ENCODE measurements at regions of chr17 and their contacts with region 1.

Region 1: GRCh38 chr17:81959362-81960129 is 1.4 kb downstream of the NOTUM start:
- DNase-seq: peak; percentile 80 to 86 (median 82)
- H3K4me3 ChIP-seq: no peak overlapping the region
- H3K4me3 Mint-ChIP-seq: peak overlapping the region in 1 of 7 donors; percentile 43
- H3K27ac ChIP-seq: peak overlapping the region; percentile 16
- H3K27ac Mint-ChIP-seq: no peak overlapping the region
- H3K4me1 ChIP-seq: no peaks in the 10 kb centered on the region
- H3K4me1 Mint-ChIP-seq: peaks cover 6 to 18% (median 7%) of the 10 kb centered on the region in 3 donors
- H3K27me3 ChIP-seq: peaks cover 13% of the 10 kb centered on the region
- H3K27me3 Mint-ChIP-seq: peaks cover 23 to 29% of the 10 kb centered on the region in 2 donors

Region 2: DNA sequence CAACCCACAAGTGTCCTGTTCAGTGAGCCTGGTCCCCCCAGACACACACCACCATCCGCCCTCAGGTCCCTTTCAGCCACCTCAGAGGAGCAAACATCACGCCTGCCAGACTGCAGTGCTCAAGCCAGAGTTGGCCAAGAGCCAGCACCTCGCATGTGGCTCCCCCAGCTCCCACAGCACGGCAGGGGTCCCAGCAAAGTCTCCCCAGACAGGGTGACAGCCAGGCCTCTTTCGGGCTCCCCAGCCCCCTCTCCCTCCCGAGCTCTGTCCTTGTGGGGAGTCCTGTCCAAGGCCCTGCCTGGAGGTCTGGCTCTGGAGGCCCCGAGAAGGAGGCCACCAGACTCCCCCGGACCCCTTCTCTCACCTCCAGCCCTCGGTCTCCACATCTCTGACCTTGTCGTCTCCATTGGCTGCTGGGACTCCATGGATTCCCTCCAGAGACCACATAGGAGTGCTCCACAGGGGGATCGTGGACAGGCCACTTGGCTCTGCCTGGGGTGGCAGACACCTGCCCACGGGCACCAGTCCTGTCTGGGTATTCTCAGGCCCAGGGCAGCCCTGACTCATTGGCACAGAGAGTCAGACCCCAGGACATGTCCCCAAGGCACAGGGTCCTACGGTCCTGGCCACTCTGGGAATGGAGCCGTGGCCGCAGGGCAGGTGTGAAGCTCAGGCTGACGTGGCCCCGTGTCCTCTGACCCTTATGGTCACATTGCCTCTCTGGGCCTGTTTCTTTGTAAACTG is 10.7 kb before region 1 on chr17:
- CTCF ChIA-PET with region 1: interaction called, 10 read pairs
- POLR2A ChIA-PET with region 1: no interaction called
- DNase-seq: no peak
- H3K4me3 ChIP-seq: no peak overlapping the region
- H3K4me3 Mint-ChIP-seq: no peak overlapping the region
- H3K27ac ChIP-seq: no peak overlapping the region
- H3K27ac Mint-ChIP-seq: peak overlapping the region in 1 of 8 donors; percentile 87
- H3K4me1 ChIP-seq: no peaks in the 10 kb centered on the region
- H3K4me1 Mint-ChIP-seq: peaks cover 0 to 3% (median 0%) of the 10 kb centered on the region in 3 donors
- H3K27me3 ChIP-seq: no peaks in the 10 kb centered on the region
- H3K27me3 Mint-ChIP-seq: no peaks in the 10 kb centered on the region

Region 3: GRCh38 chr17:81976332-81977210 is 17.0 kb after region 1 on chr17:
- CTCF ChIA-PET with region 1: interaction called, 15 read pairs
- POLR2A ChIA-PET with region 1: no interaction called
- DNase-seq: peak in 1 of 5 donors; percentile 27
- H3K4me3 ChIP-seq: peak overlapping the region; percentile 72
- H3K4me3 Mint-ChIP-seq: peak overlapping the region; percentile 80 to 96 (median 94)
- H3K27ac ChIP-seq: peak overlapping the region; percentile 72
- H3K27ac Mint-ChIP-seq: peak overlapping the region; percentile 82 to 99 (median 96)
- H3K4me1 ChIP-seq: peaks cover 28% of the 10 kb centered on the region
- H3K4me1 Mint-ChIP-seq: peaks cover 18 to 36% (median 29%) of the 10 kb centered on the region in 3 donors
- H3K27me3 ChIP-seq: no peaks in the 10 kb centered on the region
- H3K27me3 Mint-ChIP-seq: no peaks in the 10 kb centered on the region

Region 4: DNA sequence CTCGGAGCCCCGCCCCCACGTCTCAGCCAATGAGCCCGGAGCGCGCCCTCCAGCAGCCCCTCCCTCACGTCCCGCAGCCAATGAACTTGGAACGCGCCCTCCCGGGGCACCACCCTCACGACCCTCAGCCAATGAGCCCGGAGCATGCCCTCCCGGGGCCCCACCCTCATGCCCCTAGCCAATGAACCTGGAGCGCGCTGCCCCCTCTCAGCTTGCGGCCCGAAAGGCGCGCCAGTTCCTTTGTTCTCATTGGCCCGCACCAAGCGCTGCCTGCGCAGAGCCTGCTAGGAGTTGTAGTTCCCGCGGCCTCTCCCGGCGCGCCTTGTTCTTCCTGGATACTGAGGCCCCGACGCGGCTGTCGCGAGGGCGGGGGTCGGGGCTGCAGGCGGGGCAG is 63.4 kb after region 1 on chr17 and contains the start of gene LRRC45:
- CTCF ChIA-PET with region 1: interaction called, 83 read pairs
- POLR2A ChIA-PET with region 1: interaction called, 12 read pairs
- DNase-seq: peak; percentile 99 to 100 (median 100)
- H3K4me3 ChIP-seq: peak within 1 kb of the TSS; percentile 70
- H3K4me3 Mint-ChIP-seq: peak within 1 kb of the TSS; percentile 83 to 93 (median 85)
- H3K27ac ChIP-seq: peak within 1 kb of the TSS; percentile 61
- H3K27ac Mint-ChIP-seq: peak within 1 kb of the TSS in 6 of 8 donors; percentile 56 to 85 (median 70)
- H3K4me1 ChIP-seq: peaks cover 26% of the 10 kb centered on the region
- H3K4me1 Mint-ChIP-seq: peaks cover 17 to 34% (median 21%) of the 10 kb centered on the region in 3 donors
- H3K27me3 ChIP-seq: no peaks in the 10 kb centered on the region
- H3K27me3 Mint-ChIP-seq: peaks cover 0 to 2% of the 10 kb centered on the region in 2 donors
- total RNA-seq, gene LRRC45: 26.8 to 27.6 TPM

Region 5: GRCh38 chr17:82077617-82078358 is 118.2 kb after region 1 on chr17:
- CTCF ChIA-PET with region 1: no interaction called
- POLR2A ChIA-PET with region 1: no interaction called
- DNase-seq: no peak
- H3K4me3 ChIP-seq: no peak overlapping the region
- H3K4me3 Mint-ChIP-seq: peak overlapping the region in 1 of 7 donors; percentile 75
- H3K27ac ChIP-seq: no peak overlapping the region
- H3K27ac Mint-ChIP-seq: peak overlapping the region in 1 of 8 donors; percentile 68
- H3K4me1 ChIP-seq: no peaks in the 10 kb centered on the region
- H3K4me1 Mint-ChIP-seq: no peaks in the 10 kb centered on the region
- H3K27me3 ChIP-seq: no peaks in the 10 kb centered on the region
- H3K27me3 Mint-ChIP-seq: no peaks in the 10 kb centered on the region

Region 6: GRCh38 chr17:82161216-82161615 is 201.7 kb after region 1 on chr17:
- CTCF ChIA-PET with region 1: no interaction called
- POLR2A ChIA-PET with region 1: no interaction called
- DNase-seq: no peak
- H3K4me3 ChIP-seq: no peak overlapping the region
- H3K4me3 Mint-ChIP-seq: no peak overlapping the region
- H3K27ac ChIP-seq: no peak overlapping the region
- H3K27ac Mint-ChIP-seq: no peak overlapping the region
- H3K4me1 ChIP-seq: no peaks in the 10 kb centered on the region
- H3K4me1 Mint-ChIP-seq: no peaks in the 10 kb centered on the region
- H3K27me3 ChIP-seq: no peaks in the 10 kb centered on the region
- H3K27me3 Mint-ChIP-seq: no peaks in the 10 kb centered on the region